Endothelial cell of umbilical vein (primary cell): ENCODE measurements at regions of chr2 and their contacts with region 1.

Region 1: DNA sequence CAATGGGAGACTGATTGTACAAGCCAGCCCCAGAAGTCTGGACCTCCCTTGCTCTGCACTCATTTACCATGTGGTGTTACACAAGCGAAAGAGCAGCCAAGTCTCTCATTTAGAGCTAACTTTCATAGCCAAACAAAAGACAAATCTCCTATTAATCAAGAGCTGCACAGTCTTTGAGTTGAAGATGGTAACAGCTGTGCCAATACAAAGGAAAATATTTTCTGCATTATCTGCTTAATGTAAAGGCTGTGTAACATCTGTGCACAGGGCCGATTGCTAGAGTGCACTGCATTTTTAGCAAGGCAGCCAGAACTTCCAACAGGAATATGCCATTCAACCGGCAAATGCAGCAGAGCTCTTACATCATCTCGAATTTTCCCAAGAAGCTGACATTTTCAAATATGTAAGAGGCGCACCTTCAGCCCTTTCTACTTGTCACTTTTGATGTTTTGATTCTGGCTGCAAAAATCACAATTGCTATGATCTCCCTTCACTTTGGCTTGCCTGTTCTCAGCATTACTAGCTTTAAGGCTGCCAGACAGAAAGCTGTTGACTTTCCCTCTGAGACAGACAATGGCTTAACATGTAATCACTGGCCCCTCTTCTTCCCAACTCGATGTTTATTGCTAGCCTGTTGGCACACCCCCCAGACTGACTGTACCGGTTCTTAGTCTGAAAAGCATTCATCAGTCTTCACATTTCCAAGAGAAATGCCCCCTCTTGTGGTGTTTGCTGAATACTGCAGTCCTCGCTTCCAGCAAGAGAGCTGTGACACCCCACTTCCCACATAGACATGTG is 96.9 kb upstream of the TANK start:
- DNase-seq: peak; percentile 89
- H3K4me3 ChIP-seq: no peak overlapping the region
- H3K27ac ChIP-seq: no peak overlapping the region
- H3K4me1 ChIP-seq: peaks cover 4% of the 10 kb centered on the region
- H3K27me3 ChIP-seq: no peaks in the 10 kb centered on the region
- CTCF ChIP-seq: peak; percentile 79 to 91
- POLR2A ChIP-seq: no peak

Region 2: GRCh38 chr2:160109936-160110673 is 953.3 kb before region 1 on chr2:
- CTCF ChIA-PET with region 1: interaction called, 29 read pairs
- POLR2A ChIA-PET with region 1: interaction called, 5 read pairs
- dilution Hi-C with region 1: no loop called
- intact Hi-C with region 1: loop called (anchors 1 kb)
- DNase-seq: peak; percentile 83
- H3K4me3 ChIP-seq: no peak overlapping the region
- H3K27ac ChIP-seq: no peak overlapping the region
- H3K4me1 ChIP-seq: no peaks in the 10 kb centered on the region
- H3K27me3 ChIP-seq: no peaks in the 10 kb centered on the region
- CTCF ChIP-seq: peak; percentile 66 to 72
- POLR2A ChIP-seq: no peak

Region 3: GRCh38 chr2:160308915-160309314 is 754.4 kb before region 1 on chr2:
- CTCF ChIA-PET with region 1: no interaction called
- POLR2A ChIA-PET with region 1: no interaction called
- dilution Hi-C with region 1: no loop called
- intact Hi-C with region 1: no loop called
- DNase-seq: peak; percentile 50
- H3K4me3 ChIP-seq: no peak overlapping the region
- H3K27ac ChIP-seq: peak overlapping the region; percentile 88
- H3K4me1 ChIP-seq: peaks cover 22% of the 10 kb centered on the region
- H3K27me3 ChIP-seq: no peaks in the 10 kb centered on the region
- CTCF ChIP-seq: no peak
- POLR2A ChIP-seq: no peak

Region 4: DNA sequence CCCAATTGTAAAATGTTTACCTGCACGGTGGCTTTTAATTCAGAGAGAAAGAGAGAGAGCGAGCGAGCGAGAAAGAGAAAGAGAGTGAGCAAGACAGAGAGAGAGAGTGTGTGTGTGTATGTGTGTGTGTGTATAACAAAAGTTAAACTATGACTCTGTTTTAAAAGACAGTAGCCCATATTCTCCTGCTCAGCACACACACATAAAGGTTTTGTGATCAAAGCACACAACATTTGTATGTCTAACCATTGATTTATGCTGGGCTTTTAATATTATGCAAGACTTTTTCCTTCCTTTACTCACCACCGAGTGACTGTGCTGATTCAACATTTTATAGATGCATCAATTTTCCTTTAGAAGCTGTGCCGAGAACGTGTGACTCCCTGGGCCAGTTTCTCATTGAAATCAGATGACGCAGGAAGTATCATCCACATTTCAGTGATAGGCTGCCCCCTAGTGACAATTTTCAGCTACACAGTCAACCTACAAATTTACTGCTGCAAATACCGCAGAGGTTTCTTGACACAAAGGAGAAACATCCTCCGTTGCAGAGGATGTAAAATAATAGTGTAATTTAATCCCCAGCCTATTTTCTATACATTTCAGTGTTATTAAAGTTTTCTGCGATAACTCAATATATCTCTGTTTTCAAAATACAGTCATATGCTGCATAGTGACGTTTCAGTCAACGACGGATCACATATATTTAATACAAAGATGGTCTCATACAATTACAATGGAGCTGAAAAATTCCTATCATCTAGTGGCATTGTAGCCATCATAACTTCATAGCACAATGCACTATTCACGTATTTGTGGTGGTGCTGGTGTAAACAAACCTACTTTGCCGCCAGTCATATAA is 69.0 kb before region 1 on chr2:
- CTCF ChIA-PET with region 1: interaction called, 45 read pairs
- POLR2A ChIA-PET with region 1: no interaction called
- dilution Hi-C with region 1: no loop called
- intact Hi-C with region 1: no loop called
- DNase-seq: peak; percentile 86
- H3K4me3 ChIP-seq: no peak overlapping the region
- H3K27ac ChIP-seq: no peak overlapping the region
- H3K4me1 ChIP-seq: peaks cover 2% of the 10 kb centered on the region
- H3K27me3 ChIP-seq: no peaks in the 10 kb centered on the region
- CTCF ChIP-seq: peak; percentile 58 to 70
- POLR2A ChIP-seq: no peak

Region 5: DNA sequence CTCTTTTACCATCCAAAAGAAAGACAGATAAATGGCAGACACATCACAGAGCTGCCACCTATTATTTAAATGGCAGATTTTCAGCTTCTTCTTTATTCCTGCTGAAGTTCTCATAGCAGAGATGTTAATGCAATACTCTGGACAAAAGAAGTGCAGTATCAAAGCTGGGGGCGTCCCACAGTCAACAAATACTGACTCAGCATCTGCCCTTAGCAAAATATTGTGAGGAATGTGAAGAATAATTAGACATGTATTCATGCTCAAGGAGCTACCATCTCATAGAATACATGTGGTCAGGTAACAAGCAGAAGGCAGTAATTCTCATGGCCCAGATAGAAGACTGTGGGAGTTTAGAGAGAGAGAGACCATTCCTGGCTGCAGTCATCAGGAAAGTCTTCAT is 11.1 kb before region 1 on chr2:
- CTCF ChIA-PET with region 1: interaction called, 40 read pairs
- POLR2A ChIA-PET with region 1: interaction called, 3 read pairs
- dilution Hi-C with region 1: no loop called
- intact Hi-C with region 1: no loop called
- DNase-seq: no peak
- H3K4me3 ChIP-seq: no peak overlapping the region
- H3K27ac ChIP-seq: no peak overlapping the region
- H3K4me1 ChIP-seq: no peaks in the 10 kb centered on the region
- H3K27me3 ChIP-seq: peaks cover 27 to 37% of the 10 kb centered on the region in 2 experiments
- CTCF ChIP-seq: no peak
- POLR2A ChIP-seq: no peak

Region 6: GRCh38 chr2:161096336-161096735 is 33.0 kb after region 1 on chr2:
- CTCF ChIA-PET with region 1: interaction called, 10 read pairs
- POLR2A ChIA-PET with region 1: no interaction called
- dilution Hi-C with region 1: no loop called
- intact Hi-C with region 1: no loop called
- DNase-seq: peak; percentile 71
- H3K4me3 ChIP-seq: no peak overlapping the region
- H3K27ac ChIP-seq: no peak overlapping the region
- H3K4me1 ChIP-seq: peaks cover 12% of the 10 kb centered on the region
- H3K27me3 ChIP-seq: no peaks in the 10 kb centered on the region
- CTCF ChIP-seq: no peak
- POLR2A ChIP-seq: no peak

Region 7: DNA sequence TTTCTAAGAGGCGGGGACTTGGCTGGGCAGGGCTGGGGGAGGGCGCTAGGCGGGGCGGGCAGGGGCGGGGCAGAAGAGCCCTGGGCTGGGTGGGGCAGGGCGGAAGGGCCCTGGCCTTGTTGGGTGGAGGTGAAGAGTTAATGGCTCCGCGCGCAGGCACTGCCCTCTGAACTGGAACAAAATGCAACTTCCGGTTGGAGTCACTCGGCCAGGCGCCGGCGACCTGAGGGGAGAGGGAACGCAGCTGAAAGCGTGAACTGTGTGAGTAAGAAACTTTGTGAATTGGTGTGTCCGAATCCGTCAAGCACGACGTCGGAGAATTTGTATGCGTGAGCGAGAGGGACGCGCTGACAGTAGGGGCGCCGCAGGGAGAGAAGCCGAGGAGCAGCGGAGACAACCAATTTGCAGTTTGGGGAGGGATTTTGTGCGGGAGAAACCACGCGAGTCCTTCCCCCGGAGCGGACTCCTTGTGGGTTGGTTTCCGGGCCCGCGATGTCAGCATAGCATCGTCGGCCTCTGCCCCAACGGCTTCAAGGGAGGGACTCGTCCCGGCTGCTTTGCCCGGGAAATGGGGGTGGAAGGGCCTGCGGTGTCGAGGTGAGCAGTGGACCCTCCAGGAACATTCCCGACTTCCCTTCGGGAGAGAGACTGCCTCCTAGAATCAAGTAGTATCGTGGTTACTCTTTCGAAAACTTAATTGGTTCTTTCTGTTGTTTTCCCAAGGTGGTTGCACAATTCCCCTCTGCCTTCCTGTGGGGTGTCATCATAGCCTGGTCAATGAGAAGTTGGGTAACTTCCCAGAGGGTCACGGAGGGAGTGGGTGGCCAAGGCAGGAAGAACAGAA is 97.1 kb after region 1 on chr2 and contains the start of gene TANK:
- CTCF ChIA-PET with region 1: interaction called, 12 read pairs
- POLR2A ChIA-PET with region 1: no interaction called
- dilution Hi-C with region 1: no loop called
- intact Hi-C with region 1: loop called (anchors 1 kb)
- DNase-seq: peak; percentile 84
- H3K4me3 ChIP-seq: peak within 1 kb of the TSS; percentile 30 to 89 (median 50)
- H3K27ac ChIP-seq: peak within 1 kb of the TSS; percentile 75
- H3K4me1 ChIP-seq: peaks cover 18% of the 10 kb centered on the region
- H3K27me3 ChIP-seq: no peaks in the 10 kb centered on the region
- CTCF ChIP-seq: no peak
- POLR2A ChIP-seq: peak; percentile 90
- total RNA-seq, gene TANK: 83.2 and 88.2 TPM in 2 replicates